ENCODE measurements at regions of chr21 and their contacts with region 1.

Region 1: GRCh38 chr21:40120940-40121575 is 253.8 kb downstream of the PCP4 start:
- DNase-seq: no peak
- ATAC-seq: no peak
- H3K4me3 ChIP-seq: no peak overlapping the region
- H3K27ac ChIP-seq: no peak overlapping the region
- H3K4me1 ChIP-seq: no peaks in the 10 kb centered on the region
- H3K27me3 ChIP-seq: no peaks in the 10 kb centered on the region
- CTCF ChIP-seq: peak in 4 of 5 experiments; percentile 13 to 48 (median 44)
- POLR2A ChIP-seq: no peak

Region 2: DNA sequence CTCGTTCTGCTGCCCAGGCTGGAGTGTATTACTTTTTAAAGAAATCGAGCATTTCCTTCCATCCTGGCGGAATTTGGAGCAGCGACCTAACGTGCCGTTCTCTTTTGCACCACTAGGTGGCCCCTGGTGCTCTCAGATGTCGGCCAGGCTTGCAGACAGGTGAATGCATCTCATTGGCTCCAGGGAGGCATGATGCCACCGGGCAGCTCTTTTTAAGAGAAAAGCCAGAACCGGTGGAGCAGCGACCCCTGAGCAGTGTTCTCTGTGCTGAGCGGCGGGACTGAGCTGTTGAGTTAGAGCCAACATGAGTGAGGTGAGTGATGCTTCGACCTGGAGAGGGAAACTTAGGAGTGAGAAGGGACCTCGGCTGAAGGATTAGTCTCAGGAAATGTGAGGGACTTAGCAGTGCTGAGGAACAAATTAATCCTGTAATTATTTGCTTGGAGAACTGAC is 253.8 kb before region 1 on chr21 and contains the start of gene PCP4:
- in situ Hi-C with region 1: loop called in 3 of 4 experiments (anchors 25 kb)
- intact Hi-C with region 1: loop called (anchors 5 kb)
- DNase-seq: no peak
- ATAC-seq: no peak
- H3K4me3 ChIP-seq: no peak within 1 kb of the TSS
- H3K27ac ChIP-seq: no peak within 1 kb of the TSS
- H3K4me1 ChIP-seq: no peaks in the 10 kb centered on the region
- H3K27me3 ChIP-seq: peaks cover 0 to 5% (median 0%) of the 10 kb centered on the region in 3 donors
- CTCF ChIP-seq: peak in 3 of 5 experiments; percentile 34 to 62 (median 61)
- POLR2A ChIP-seq: no peak
- total RNA-seq, gene PCP4: not detected

Region 3: GRCh38 chr21:40049394-40050290 is 71.4 kb before region 1 on chr21:
- in situ Hi-C with region 1: no loop called
- intact Hi-C with region 1: loop called (anchors 10 kb)
- DNase-seq: no peak
- ATAC-seq: no peak
- H3K4me3 ChIP-seq: no peak overlapping the region
- H3K27ac ChIP-seq: peak overlapping the region in 1 of 4 donors; percentile 24
- H3K4me1 ChIP-seq: no peaks in the 10 kb centered on the region
- H3K27me3 ChIP-seq: no peaks in the 10 kb centered on the region
- CTCF ChIP-seq: no peak
- POLR2A ChIP-seq: no peak